CD8-positive, alpha-beta memory T cell (primary cell): ENCODE measurements at regions of chr2 and their contacts with region 1.

Region 1: GRCh38 chr2:136117909-136118818 is at the start of gene CXCR4:
- DNase-seq: peak; percentile 82 to 97 (median 89)
- H3K4me3 ChIP-seq: peak within 1 kb of the TSS; percentile 87
- H3K4me3 Mint-ChIP-seq: peak within 1 kb of the TSS; percentile 93 to 100 (median 98)
- H3K27ac ChIP-seq: peak within 1 kb of the TSS; percentile 98
- H3K27ac Mint-ChIP-seq: peak within 1 kb of the TSS; percentile 98 to 100 (median 99)
- H3K4me1 ChIP-seq: peaks cover 47% of the 10 kb centered on the region
- H3K4me1 Mint-ChIP-seq: peaks cover 58 to 67% (median 65%) of the 10 kb centered on the region in 3 donors
- H3K27me3 ChIP-seq: no peaks in the 10 kb centered on the region
- H3K27me3 Mint-ChIP-seq: peaks cover 0 to 30% of the 10 kb centered on the region in 2 donors
- total RNA-seq, gene CXCR4: 102 to 106 TPM

Region 2: DNA sequence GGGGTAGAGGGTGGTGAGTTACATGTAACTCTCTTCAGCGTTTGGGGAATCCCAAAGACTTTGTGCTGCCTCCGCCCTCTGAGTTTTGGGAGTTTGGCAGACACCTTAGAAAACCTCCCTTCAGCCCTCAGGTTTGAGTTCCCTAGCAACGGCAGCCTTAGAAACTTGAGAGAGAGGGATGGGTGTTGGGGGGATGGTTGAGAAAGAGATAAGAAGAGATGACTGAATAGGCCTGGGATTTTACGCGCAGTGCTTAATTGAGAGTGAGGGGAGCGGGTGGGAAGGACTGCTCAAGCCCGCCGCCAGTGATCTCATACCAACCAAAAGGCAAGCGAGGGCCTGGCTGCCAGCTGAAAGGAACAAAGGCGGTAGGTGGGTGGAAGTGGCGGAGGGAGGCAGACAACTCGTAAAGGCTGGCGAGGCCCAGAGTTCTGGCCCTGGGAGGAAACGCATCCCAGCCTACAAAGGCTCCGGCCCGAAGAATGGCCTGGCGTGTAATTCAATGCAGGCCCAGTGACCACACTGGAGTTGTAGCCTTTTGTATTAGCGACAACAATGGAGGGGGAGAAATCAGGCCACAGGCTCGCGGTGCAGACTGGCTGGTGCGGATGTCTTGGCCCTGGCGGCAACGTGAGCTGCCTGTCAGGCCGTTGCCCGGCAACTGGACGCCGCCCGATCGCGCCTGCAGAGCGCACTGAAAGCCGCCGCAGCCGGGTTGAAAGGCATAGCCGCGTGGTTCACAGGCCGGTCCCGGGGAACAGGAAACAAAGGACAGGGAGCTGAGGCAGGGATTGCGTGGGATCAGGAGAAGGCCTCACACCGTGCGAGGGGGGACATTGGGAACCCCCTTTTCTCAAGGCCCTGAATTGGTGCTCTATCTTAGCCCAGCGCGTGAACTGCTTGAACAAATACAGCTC is 92.8 kb before region 1 on chr2:
- CTCF ChIA-PET with region 1: no interaction called
- POLR2A ChIA-PET with region 1: no interaction called
- DNase-seq: peak in 2 of 5 donors; percentile 14 to 24
- H3K4me3 ChIP-seq: no peak overlapping the region
- H3K4me3 Mint-ChIP-seq: peak overlapping the region in 1 of 7 donors; percentile 21
- H3K27ac ChIP-seq: no peak overlapping the region
- H3K27ac Mint-ChIP-seq: peak overlapping the region in 2 of 8 donors; percentile 32 to 34
- H3K4me1 ChIP-seq: no peaks in the 10 kb centered on the region
- H3K4me1 Mint-ChIP-seq: no peaks in the 10 kb centered on the region
- H3K27me3 ChIP-seq: no peaks in the 10 kb centered on the region
- H3K27me3 Mint-ChIP-seq: peaks cover 0 to 2% of the 10 kb centered on the region in 2 donors

Region 3: DNA sequence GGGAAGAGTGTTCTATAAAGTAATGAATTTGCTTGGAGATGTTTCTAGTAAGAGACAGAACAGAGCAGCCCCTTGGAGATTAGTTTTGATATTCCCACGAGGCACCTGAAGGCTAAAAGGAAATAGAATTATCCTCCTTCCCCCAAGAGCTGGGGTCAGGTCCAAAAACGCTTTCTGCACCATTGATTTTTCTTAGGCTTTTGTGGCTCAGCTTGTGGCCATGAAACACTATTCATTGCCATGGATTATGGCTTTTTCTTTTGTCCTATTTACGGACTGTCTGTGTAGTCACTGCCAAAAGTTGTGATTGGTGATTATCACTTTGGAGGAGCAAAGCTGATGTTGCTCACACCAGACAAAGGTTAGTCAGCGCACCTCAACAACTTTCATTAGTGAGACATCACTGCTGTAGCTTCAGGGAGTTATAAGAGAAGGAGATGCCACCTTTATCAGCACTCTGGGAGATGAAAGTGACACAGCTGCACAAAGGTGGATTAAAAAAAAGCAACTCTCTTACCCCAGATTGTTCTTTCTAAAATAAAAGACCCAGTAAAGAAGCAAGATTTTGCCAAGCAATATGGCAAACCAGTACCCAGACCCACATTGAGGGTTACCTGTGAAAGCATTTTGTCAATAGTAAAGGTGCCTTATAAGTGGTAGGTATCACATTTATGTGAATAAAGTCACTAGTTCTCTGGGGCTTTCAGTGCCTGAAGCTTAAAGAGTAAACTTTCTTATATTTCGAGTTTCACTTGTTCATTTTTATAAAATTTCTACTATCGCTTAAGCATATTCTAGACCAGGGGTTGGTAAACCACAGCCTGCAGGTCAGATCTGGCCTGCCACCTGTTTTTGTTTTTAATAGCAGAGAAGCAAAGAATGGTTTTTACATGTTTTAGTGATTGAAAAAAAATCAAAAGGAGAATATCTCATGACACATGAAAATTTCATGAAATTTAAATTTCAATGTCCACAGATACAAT is 10.8 kb before region 1 on chr2:
- CTCF ChIA-PET with region 1: no interaction called
- POLR2A ChIA-PET with region 1: no interaction called
- DNase-seq: no peak
- H3K4me3 ChIP-seq: no peak overlapping the region
- H3K4me3 Mint-ChIP-seq: no peak overlapping the region
- H3K27ac ChIP-seq: no peak overlapping the region
- H3K27ac Mint-ChIP-seq: peak overlapping the region in 1 of 8 donors; percentile 54
- H3K4me1 ChIP-seq: no peaks in the 10 kb centered on the region
- H3K4me1 Mint-ChIP-seq: peaks cover 2 to 3% (median 2%) of the 10 kb centered on the region in 3 donors
- H3K27me3 ChIP-seq: no peaks in the 10 kb centered on the region
- H3K27me3 Mint-ChIP-seq: no peaks in the 10 kb centered on the region

Region 4: GRCh38 chr2:136129601-136130000 is 11.4 kb after region 1 on chr2:
- CTCF ChIA-PET with region 1: interaction called, 21 read pairs
- POLR2A ChIA-PET with region 1: interaction called, 131 read pairs
- DNase-seq: peak in 4 of 5 donors; percentile 38 to 88 (median 80)
- H3K4me3 ChIP-seq: peak overlapping the region; percentile 27
- H3K4me3 Mint-ChIP-seq: peak overlapping the region; percentile 77 to 91 (median 82)
- H3K27ac ChIP-seq: peak overlapping the region; percentile 89
- H3K27ac Mint-ChIP-seq: peak overlapping the region; percentile 98 to 100 (median 99)
- H3K4me1 ChIP-seq: peaks cover 98% of the 10 kb centered on the region
- H3K4me1 Mint-ChIP-seq: peaks cover 95 to 100% (median 99%) of the 10 kb centered on the region in 3 donors
- H3K27me3 ChIP-seq: no peaks in the 10 kb centered on the region
- H3K27me3 Mint-ChIP-seq: peaks cover 0 to 9% of the 10 kb centered on the region in 2 donors

Region 5: GRCh38 chr2:136238286-136239078 is 120.3 kb after region 1 on chr2:
- CTCF ChIA-PET with region 1: interaction called, 5 read pairs
- POLR2A ChIA-PET with region 1: interaction called, 13 read pairs
- DNase-seq: peak; percentile 38 to 82 (median 71)
- H3K4me3 ChIP-seq: peak overlapping the region; percentile 27
- H3K4me3 Mint-ChIP-seq: peak overlapping the region in 6 of 7 donors; percentile 2 to 55 (median 26)
- H3K27ac ChIP-seq: peak overlapping the region; percentile 68
- H3K27ac Mint-ChIP-seq: peak overlapping the region; percentile 80 to 99 (median 93)
- H3K4me1 ChIP-seq: peaks cover 45% of the 10 kb centered on the region
- H3K4me1 Mint-ChIP-seq: peaks cover 56 to 82% (median 63%) of the 10 kb centered on the region in 3 donors
- H3K27me3 ChIP-seq: no peaks in the 10 kb centered on the region
- H3K27me3 Mint-ChIP-seq: no peaks in the 10 kb centered on the region